ENCODE measurements at regions of chr2 and their contacts with region 1.

Region 1: GRCh38 chr2:152025678-152026287 is 73.1 kb downstream of the CACNB4 start:
- DNase-seq: peak; percentile 79
- H3K4me3 Mint-ChIP-seq: peak overlapping the region; percentile 60
- H3K27ac Mint-ChIP-seq: no peak overlapping the region
- H3K4me1 Mint-ChIP-seq: peaks cover 24% of the 10 kb centered on the region
- H3K27me3 Mint-ChIP-seq: peaks cover under 1% of the 10 kb centered on the region
- CTCF ChIP-seq: peak; percentile 93

Region 2: DNA sequence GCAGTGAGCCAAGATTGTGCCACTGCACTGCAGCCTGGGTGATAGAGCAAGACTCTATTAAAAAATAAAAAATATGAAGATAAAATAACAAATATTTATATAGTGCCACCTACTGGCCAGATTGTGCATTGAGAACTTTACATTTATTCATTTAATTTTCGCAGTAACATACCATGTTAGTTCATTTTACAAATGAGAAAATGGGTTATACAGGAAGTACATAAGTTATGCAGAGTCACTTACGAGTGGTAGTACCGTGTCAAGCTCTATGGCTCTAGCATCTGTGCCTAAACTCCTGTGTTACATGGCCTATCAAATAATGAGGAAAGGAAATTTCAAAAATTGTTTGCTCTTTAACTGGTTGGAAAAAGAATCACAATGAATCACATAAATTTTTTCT is 588.2 kb before region 1 on chr2:
- CTCF ChIA-PET with region 1: interaction called, 32 read pairs
- POLR2A ChIA-PET with region 1: no interaction called
- intact Hi-C with region 1: no loop called
- DNase-seq: peak; percentile 32
- H3K4me3 Mint-ChIP-seq: no peak overlapping the region
- H3K27ac Mint-ChIP-seq: peak overlapping the region; percentile 64
- H3K4me1 Mint-ChIP-seq: no peaks in the 10 kb centered on the region
- H3K27me3 Mint-ChIP-seq: no peaks in the 10 kb centered on the region
- CTCF ChIP-seq: peak; percentile 47

Region 3: GRCh38 chr2:151491496-151491895 is 534.3 kb before region 1 on chr2:
- CTCF ChIA-PET with region 1: interaction called, 9 read pairs
- POLR2A ChIA-PET with region 1: no interaction called
- intact Hi-C with region 1: loop called (anchors 10 kb)
- DNase-seq: no peak
- H3K4me3 Mint-ChIP-seq: no peak overlapping the region
- H3K27ac Mint-ChIP-seq: no peak overlapping the region
- H3K4me1 Mint-ChIP-seq: no peaks in the 10 kb centered on the region
- H3K27me3 Mint-ChIP-seq: no peaks in the 10 kb centered on the region
- CTCF ChIP-seq: no peak

Region 4: GRCh38 chr2:151691631-151692030 is 334.2 kb before region 1 on chr2:
- CTCF ChIA-PET with region 1: interaction called, 15 read pairs
- POLR2A ChIA-PET with region 1: no interaction called
- intact Hi-C with region 1: no loop called
- DNase-seq: no peak
- H3K4me3 Mint-ChIP-seq: no peak overlapping the region
- H3K27ac Mint-ChIP-seq: no peak overlapping the region
- H3K4me1 Mint-ChIP-seq: no peaks in the 10 kb centered on the region
- H3K27me3 Mint-ChIP-seq: no peaks in the 10 kb centered on the region
- CTCF ChIP-seq: no peak

Region 5: GRCh38 chr2:151808258-151809072 is 217.3 kb before region 1 on chr2:
- CTCF ChIA-PET with region 1: interaction called, 14 read pairs
- POLR2A ChIA-PET with region 1: no interaction called
- intact Hi-C with region 1: no loop called
- DNase-seq: peak; percentile 38
- H3K4me3 Mint-ChIP-seq: no peak overlapping the region
- H3K27ac Mint-ChIP-seq: no peak overlapping the region
- H3K4me1 Mint-ChIP-seq: no peaks in the 10 kb centered on the region
- H3K27me3 Mint-ChIP-seq: no peaks in the 10 kb centered on the region
- CTCF ChIP-seq: peak; percentile 26

Region 6: DNA sequence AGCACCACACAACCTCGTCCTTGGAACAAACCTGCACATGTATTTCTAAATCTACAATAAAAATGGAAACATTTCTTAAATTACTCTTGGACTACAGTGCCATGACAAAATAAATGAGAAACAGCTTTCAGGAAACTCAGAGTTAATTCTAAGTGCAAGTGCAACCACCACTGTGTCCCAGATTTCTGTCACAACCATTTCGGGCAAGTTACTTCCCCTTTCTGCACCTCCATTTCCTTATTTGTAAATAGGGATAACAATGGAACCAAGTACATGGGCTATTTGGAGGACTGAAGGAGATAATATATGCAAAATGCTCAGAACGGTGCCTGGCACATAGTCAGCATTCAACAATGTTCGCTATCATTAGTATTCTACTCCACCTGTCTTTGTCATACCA is 20.2 kb before region 1 on chr2:
- CTCF ChIA-PET with region 1: interaction called, 70 read pairs
- POLR2A ChIA-PET with region 1: no interaction called
- intact Hi-C with region 1: no loop called
- DNase-seq: no peak
- H3K4me3 Mint-ChIP-seq: no peak overlapping the region
- H3K27ac Mint-ChIP-seq: no peak overlapping the region
- H3K4me1 Mint-ChIP-seq: peaks cover 8% of the 10 kb centered on the region
- H3K27me3 Mint-ChIP-seq: no peaks in the 10 kb centered on the region
- CTCF ChIP-seq: no peak

Region 7: DNA sequence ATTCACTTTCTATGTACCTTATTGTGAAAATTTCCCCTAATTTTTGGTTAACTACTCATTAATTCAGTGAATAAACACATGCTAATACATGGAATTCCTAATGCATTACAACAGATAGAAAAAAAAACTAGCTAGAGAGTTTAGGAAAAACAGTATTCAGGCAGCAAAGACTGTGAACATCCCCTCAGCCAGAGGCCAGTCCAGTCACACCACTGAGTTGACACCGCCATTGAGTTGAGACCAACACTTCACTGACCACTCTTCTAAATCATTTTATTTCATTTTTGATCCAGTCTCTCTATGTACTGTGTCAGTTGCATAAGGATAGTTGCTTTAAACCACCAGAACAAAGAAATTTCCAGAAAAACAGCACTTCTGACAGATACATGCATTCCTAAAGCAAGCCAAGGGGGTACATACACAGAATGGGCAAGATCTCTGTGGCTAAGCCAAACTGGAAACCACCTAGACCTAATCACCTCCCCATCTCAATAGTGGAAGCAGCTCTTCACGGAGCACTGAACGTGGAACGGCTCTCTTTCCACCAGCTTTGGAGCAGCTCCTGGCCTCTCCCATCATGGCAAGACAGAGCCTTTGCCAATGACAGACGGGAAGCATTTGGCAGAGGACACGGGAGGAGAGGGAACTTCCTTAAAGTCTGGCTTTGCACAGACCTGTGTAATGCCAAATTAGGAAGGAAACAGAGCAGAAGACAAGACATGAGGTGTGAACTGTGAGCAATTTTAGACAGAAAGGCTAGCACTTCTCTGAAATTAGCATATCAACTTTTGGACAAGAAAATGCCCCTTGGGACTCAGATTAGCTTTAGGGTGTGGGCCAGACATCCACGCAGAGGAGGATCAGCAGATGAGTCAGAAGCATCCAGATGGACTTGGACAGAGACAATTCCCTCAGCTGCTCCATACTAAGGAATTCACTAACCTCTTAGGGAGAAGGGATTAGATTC is 36.6 kb after region 1 on chr2:
- CTCF ChIA-PET with region 1: no interaction called
- POLR2A ChIA-PET with region 1: no interaction called
- intact Hi-C with region 1: no loop called
- DNase-seq: peak; percentile 45
- H3K4me3 Mint-ChIP-seq: no peak overlapping the region
- H3K27ac Mint-ChIP-seq: no peak overlapping the region
- H3K4me1 Mint-ChIP-seq: peaks cover 8% of the 10 kb centered on the region
- H3K27me3 Mint-ChIP-seq: peaks cover 18% of the 10 kb centered on the region
- CTCF ChIP-seq: no peak

Measured in MCF 10A (cell line).